SK-N-SH (cell line): ENCODE measurements at regions of chr12 and their contacts with region 1.

Region 1: GRCh38 chr12:109518820-109519665 is 41.6 kb downstream of the UBE3B start:
- DNase-seq: peak; percentile 81
- H3K4me3 ChIP-seq: peak overlapping the region in 1 of 2 experiments; percentile 26; a peak in 1 of 4 replicates
- H3K27ac ChIP-seq: peak overlapping the region; percentile 57 to 89
- H3K4me1 ChIP-seq: peaks cover 14 to 52% of the 10 kb centered on the region in 2 experiments; a peak in 3 of 4 replicates
- H3K27me3 ChIP-seq: no peaks in the 10 kb centered on the region
- CTCF ChIP-seq: peak; percentile 93
- EP300 ChIP-seq: no peak
- RAD21 ChIP-seq: peak; percentile 96

Region 2: DNA sequence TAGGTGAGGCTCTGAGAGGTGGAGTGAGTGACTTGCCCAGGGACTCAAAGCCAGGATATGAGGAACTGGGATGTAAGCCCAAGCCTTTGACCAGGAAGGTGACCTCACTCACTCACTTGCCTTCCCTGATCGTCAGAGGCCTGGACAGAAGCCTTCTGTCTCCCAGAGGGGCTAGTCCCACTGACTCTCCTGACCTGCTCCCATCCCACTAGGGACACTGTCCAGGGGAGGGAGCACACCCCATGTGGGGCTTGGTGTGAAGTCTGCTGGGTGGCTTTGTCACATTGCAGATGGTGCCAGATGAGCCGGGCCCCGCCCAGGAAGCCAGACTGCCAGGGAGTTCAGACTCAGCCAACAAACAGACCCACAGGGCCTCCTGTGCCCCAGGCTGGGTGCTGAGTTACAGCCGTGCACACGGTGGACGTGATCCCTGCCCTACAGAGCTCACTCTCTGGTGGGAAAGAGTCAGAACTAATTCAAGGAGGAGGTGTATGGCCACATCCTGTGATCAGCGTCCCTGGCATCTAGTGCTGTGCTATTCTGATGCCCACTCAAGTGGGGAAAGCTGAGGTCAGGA is 26.0 kb after region 1 on chr12:
- CTCF ChIA-PET with region 1: interaction called, 23 read pairs
- POLR2A ChIA-PET with region 1: interaction called, 10 read pairs
- DNase-seq: peak; percentile 57
- H3K4me3 ChIP-seq: no peak overlapping the region
- H3K27ac ChIP-seq: peak overlapping the region in 1 of 2 experiments; percentile 62; a peak in 1 of 4 replicates
- H3K4me1 ChIP-seq: peaks cover 0 to 54% of the 10 kb centered on the region in 2 experiments; a peak in 2 of 4 replicates
- H3K27me3 ChIP-seq: no peaks in the 10 kb centered on the region
- CTCF ChIP-seq: no peak
- EP300 ChIP-seq: no peak
- RAD21 ChIP-seq: no peak

Region 3: DNA sequence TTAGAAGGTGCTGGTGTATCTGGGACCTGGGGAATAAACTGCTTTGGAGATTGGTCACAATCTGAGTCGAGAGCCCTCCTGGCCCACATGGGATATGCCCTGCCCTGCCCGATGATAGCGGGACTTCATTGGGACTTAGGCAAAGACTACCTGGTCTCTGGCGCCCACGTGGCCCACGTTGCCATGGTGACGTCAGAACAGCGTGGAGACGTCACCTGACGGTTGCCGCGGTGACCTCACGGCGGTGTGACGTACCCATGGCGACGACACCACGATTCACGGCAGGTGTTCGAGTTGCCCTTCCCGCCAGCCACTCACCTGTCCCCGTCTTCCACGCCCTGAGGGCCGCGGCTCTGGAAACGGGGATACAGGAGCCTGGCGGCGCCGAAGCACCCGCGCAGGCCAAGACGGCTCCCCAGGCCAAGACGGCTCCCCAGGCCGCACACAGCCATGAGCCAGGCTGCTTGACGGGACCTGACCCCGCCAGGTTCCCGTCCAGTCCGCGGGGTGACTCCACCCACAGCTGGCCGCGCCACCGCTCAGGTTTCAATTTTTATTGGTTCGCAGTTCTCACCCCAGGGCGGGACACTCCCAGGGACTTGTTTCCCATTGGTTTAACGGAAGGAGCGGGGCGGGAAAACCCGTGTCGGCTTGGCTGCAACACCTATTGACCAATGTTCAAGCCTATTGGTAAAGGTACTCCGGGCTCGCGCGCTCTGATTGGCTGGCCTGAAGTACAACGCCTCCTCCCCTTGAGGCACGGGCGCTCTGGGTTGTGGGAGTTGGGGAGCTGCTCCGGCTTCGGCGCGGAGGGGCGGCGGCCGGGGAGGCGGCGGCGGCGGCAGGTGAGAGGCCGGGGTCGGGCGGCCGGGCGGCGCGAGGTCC is 54.2 kb after region 1 on chr12 and contains the starts of genes MMAB and MVK:
- CTCF ChIA-PET with region 1: interaction called, 14 read pairs
- POLR2A ChIA-PET with region 1: interaction called, 4 read pairs
- DNase-seq: peak; percentile 98
- H3K4me3 ChIP-seq: peak within 1 kb of the TSS; percentile 66 to 77
- H3K27ac ChIP-seq: peak within 1 kb of the TSS; percentile 36 to 82; a peak in 3 of 4 replicates
- H3K4me1 ChIP-seq: peaks cover 0 to 14% of the 10 kb centered on the region in 2 experiments; a peak in 2 of 4 replicates
- H3K27me3 ChIP-seq: no peaks in the 10 kb centered on the region
- CTCF ChIP-seq: no peak
- EP300 ChIP-seq: no peak
- RAD21 ChIP-seq: no peak
- polyA plus RNA-seq, gene MMAB: 14.8 and 15.9 TPM in 2 replicates
- polyA plus RNA-seq, gene MVK: 6.3 and 7.0 TPM in 2 replicates

Region 4: DNA sequence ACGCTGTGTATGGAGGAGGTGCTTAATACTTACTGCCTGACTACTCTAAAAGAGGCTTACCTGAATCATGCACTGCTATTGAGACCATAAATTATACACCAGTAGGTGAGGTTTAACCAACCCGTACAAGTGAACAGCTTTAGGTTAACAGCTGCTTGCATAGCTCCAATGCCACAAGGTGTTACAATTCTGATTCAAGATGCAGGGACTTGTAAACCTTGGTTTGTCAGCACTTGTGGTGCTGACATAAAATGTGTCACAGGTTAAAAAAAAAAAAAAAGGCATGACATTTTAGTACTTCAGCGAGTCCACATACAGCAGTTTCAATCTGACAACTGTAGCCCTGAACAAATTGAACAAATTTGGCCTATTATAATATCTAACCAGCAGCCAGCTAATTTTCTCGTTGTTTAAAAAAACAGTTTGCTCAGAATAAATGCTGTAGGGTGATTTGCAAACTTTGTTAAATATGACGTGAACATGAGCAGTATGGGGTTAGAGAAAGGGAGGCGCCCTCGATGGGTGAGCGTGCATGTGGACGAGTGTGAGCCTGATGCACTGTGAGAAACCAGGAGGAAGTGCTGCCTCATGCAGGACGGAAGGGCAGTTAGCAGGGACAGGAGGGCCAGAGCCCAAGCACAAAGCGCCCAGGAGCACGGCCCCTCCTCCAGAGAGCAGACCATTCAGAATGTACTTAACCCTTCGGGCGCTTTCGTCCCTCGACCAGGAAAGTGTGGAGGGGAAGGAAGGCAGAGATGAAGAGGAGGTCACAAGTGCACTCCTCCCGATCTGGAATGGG is 425.7 kb after region 1 on chr12:
- CTCF ChIA-PET with region 1: no interaction called
- POLR2A ChIA-PET with region 1: no interaction called
- DNase-seq: peak; percentile 60
- H3K4me3 ChIP-seq: no peak overlapping the region
- H3K27ac ChIP-seq: no peak overlapping the region
- H3K4me1 ChIP-seq: peaks cover 5 to 30% of the 10 kb centered on the region in 2 experiments
- H3K27me3 ChIP-seq: no peaks in the 10 kb centered on the region
- CTCF ChIP-seq: no peak
- EP300 ChIP-seq: no peak
- RAD21 ChIP-seq: 0 out of 2 replicates have a peak, but pooled peaks have one; percentile 14